A673 (cell line): ENCODE measurements at regions of chr1 and their contacts with region 1.

Region 1: GRCh38 chr1:45303582-45304310 is 22.9 kb upstream of the HPDL start:
- DNase-seq: peak; percentile 98
- H3K4me3 ChIP-seq: peak overlapping the region; percentile 52
- H3K27ac ChIP-seq: peak overlapping the region; percentile 81
- H3K4me1 ChIP-seq: peaks cover 11% of the 10 kb centered on the region
- H3K27me3 ChIP-seq: no peaks in the 10 kb centered on the region
- CTCF ChIP-seq: peak; percentile 83

Region 2: DNA sequence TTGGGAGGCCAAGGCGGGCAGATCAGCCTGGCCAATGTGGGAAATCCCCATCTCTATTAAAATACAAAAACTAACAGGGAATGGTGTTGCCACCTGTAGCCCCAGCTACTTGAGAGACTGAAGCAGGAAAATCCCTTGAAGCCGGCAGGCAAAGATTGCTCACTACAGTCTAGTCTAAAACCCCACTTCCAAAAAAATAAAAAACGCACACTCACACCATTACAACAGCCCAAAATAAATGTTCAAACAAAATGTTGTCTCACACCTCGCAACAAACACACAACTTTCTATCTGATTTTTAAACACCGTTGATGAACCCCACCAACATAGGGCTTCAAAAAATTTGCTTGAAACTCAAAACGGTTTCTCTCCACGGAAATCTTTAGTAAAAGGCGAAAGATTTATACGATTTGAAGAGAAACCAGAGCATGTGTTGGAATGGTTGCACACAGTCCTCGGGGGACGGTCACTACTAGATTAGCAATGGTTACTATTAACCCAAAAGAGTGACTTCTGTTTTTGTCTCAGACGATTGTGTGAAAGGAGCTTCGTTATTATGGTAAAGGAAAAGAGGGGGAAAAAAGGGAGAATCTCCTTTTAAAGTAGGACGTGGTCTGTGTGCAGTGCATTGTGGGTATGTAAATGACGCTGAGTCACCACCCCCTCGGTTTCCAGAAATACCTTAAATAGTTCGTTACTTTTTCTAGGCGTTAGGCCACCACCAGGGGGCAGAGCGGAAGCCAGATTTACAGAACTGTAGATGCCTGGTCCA is 572.8 kb before region 1 on chr1 and contains the start of gene RNU5D-1:
- CTCF ChIA-PET with region 1: no interaction called
- POLR2A ChIA-PET with region 1: no interaction called
- intact Hi-C with region 1: loop called (anchors 10 kb)
- DNase-seq: peak; percentile 98
- H3K4me3 ChIP-seq: no peak within 1 kb of the TSS
- H3K27ac ChIP-seq: peak within 1 kb of the TSS; percentile 99
- H3K4me1 ChIP-seq: peaks cover 4% of the 10 kb centered on the region
- H3K27me3 ChIP-seq: no peaks in the 10 kb centered on the region
- CTCF ChIP-seq: peak; percentile 90
- total RNA-seq, gene RNU5D-1: not detected in 2 replicates

Region 3: GRCh38 chr1:44799770-44800584 is 503.8 kb before region 1 on chr1 and contains the start of gene PLK3:
- CTCF ChIA-PET with region 1: interaction called, 4 read pairs
- POLR2A ChIA-PET with region 1: no interaction called
- intact Hi-C with region 1: loop called (anchors 10 kb)
- DNase-seq: peak; percentile 98
- H3K4me3 ChIP-seq: peak within 1 kb of the TSS; percentile 71
- H3K27ac ChIP-seq: peak within 1 kb of the TSS; percentile 91
- H3K4me1 ChIP-seq: peaks cover 4% of the 10 kb centered on the region
- H3K27me3 ChIP-seq: no peaks in the 10 kb centered on the region
- CTCF ChIP-seq: peak; percentile 93
- total RNA-seq, gene PLK3: 10.8 and 15.6 TPM in 2 replicates

Region 4: GRCh38 chr1:45011837-45012638 is 291.7 kb before region 1 on chr1 and contains the start of gene UROD:
- CTCF ChIA-PET with region 1: interaction called, 12 read pairs
- POLR2A ChIA-PET with region 1: interaction called, 7 read pairs
- intact Hi-C with region 1: loop called (anchors 1 kb)
- DNase-seq: peak; percentile 97
- H3K4me3 ChIP-seq: peak within 1 kb of the TSS; percentile 85
- H3K27ac ChIP-seq: peak within 1 kb of the TSS; percentile 68
- H3K4me1 ChIP-seq: peaks cover 10% of the 10 kb centered on the region
- H3K27me3 ChIP-seq: no peaks in the 10 kb centered on the region
- CTCF ChIP-seq: no peak
- total RNA-seq, gene UROD: 85.8 and 89.3 TPM in 2 replicates

Region 5: GRCh38 chr1:45266151-45266801 is 37.5 kb before region 1 on chr1:
- CTCF ChIA-PET with region 1: no interaction called
- POLR2A ChIA-PET with region 1: interaction called, 10 read pairs
- intact Hi-C with region 1: no loop called
- DNase-seq: no peak
- H3K4me3 ChIP-seq: no peak overlapping the region
- H3K27ac ChIP-seq: no peak overlapping the region
- H3K4me1 ChIP-seq: no peaks in the 10 kb centered on the region
- H3K27me3 ChIP-seq: peaks cover 3% of the 10 kb centered on the region
- CTCF ChIP-seq: no peak

Region 6: DNA sequence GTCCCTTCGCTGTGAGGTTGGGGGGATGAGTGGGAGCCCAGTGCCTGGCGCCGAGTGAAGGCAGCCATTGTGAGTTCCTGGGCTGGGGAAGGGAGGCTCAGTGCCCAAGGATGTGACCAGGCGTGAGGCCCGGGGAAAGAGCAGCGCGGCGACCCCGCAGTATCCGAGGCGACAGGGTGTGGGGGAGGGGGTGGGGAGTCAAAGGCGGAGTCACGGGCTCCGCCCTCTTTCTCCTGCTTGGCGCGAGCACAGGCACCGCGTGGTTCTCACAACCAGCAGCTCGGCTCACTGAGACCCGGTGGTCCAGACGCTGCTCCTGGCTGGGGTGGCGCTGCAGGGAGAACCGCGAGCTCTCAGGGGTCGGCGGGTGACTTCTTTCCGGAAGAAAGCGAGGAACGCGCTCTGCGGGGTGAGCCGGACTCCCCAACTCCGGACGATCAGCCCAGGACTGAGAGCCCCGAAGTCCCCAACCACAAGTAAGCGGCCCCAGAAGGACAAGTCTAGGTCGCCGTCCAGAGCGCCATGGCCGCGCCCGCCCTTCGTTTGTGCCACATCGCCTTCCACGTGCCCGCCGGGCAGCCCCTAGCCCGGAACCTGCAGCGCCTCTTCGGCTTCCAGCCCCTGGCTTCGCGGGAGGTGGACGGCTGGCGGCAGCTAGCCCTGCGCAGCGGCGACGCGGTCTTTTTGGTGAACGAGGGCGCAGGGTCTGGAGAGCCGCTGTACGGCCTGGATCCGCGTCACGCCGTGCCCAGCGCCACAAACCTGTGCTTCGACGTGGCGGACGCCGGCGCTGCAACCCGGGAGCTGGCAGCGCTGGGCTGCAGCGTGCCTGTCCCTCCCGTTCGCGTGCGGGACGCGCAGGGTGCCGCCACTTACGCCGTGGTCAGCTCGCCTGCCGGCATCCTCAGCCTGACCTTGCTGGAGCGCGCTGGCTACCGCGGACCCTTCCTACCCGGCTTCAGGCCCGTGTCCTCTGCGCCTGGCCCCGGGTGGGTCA is 23.2 kb after region 1 on chr1 and contains the start of gene HPDL:
- CTCF ChIA-PET with region 1: interaction called, 10 read pairs
- POLR2A ChIA-PET with region 1: no interaction called
- intact Hi-C with region 1: no loop called
- DNase-seq: peak; percentile 71
- H3K4me3 ChIP-seq: peak within 1 kb of the TSS; percentile 33
- H3K27ac ChIP-seq: peak within 1 kb of the TSS; percentile 57
- H3K4me1 ChIP-seq: peaks cover 26% of the 10 kb centered on the region
- H3K27me3 ChIP-seq: no peaks in the 10 kb centered on the region
- CTCF ChIP-seq: no peak
- total RNA-seq, gene HPDL: 7.3 and 7.8 TPM in 2 replicates

Region 7: GRCh38 chr1:45521398-45522323 is 217.9 kb after region 1 on chr1 and contains the start of gene PRDX1:
- CTCF ChIA-PET with region 1: interaction called, 4 read pairs
- POLR2A ChIA-PET with region 1: interaction called, 10 read pairs
- intact Hi-C with region 1: no loop called
- DNase-seq: peak; percentile 98
- H3K4me3 ChIP-seq: peak within 1 kb of the TSS; percentile 91
- H3K27ac ChIP-seq: peak within 1 kb of the TSS; percentile 91
- H3K4me1 ChIP-seq: peaks cover 26% of the 10 kb centered on the region
- H3K27me3 ChIP-seq: no peaks in the 10 kb centered on the region
- CTCF ChIP-seq: no peak
- total RNA-seq, gene PRDX1: 947 and 1,108 TPM in 2 replicates